ENCODE measurements at regions of chr1 and their contacts with region 1.

Region 1: DNA sequence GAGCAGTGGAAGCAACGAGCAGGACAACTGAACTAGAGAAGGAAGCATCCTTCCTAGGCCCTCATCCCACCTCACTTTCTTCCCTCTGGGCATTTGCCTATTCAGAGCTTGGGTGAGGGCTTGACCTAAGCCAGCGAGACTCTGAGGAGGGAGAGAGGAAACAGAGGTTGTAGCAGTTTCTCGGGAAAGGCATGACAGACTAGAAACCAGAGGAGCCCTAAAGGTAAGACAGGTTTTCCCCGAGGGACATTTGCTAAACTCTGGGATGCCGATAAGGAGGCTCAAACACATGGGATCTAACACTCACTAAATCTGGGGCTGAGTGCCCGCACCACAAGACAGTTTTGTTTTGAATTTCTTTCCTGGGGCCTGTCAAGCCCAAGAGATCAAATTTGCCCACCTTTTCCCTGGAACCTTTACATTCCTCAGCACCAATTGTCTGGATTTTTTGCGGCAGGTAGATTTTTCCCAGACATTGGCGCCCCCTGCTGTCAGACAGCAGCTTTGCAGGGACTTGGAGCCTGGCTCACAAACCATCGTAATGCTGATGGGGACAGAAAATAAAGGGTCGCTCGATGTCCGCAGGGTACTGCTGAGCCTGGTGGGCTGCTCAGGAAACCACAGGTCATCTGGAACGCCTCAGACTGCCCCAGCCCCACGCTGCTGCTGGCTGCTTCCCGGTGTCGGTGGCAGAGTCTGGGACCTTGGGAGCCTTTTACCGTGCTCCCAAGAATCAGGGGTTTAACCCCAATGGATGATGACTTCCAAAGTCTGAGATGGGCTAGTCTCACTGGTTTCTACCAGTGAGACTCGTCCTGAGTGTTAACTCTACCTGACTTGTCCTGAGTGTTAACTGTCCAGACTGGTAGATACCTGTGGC is 23.4 kb upstream of the TSPAN2 start:
- DNase-seq: peak; percentile 25
- H3K4me3 ChIP-seq: no peak overlapping the region
- H3K27ac ChIP-seq: no peak overlapping the region
- H3K4me1 ChIP-seq: no peaks in the 10 kb centered on the region
- H3K27me3 ChIP-seq: no peaks in the 10 kb centered on the region
- CTCF ChIP-seq: peak; percentile 86 to 88
- POLR2A ChIP-seq: no peak

Region 2: DNA sequence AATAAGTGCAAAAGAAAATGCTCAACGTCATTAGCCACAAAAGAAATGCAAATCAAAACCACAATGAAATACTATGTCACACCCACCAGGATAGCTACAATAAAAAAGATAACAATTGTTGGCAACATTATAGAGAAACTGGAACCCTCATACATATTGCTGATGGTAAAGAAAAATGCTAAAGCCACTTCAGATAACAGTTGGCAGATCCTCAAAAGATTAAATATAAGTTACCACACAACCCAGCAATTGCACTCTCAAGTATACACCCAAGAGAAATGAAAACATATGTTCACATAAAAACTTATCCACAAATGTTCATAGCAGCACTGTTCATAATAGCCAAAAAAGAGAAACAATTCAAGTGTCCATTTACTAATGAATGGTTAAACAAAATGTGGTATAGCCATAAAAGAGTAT is 622.5 kb before region 1 on chr1:
- CTCF ChIA-PET with region 1: no interaction called
- POLR2A ChIA-PET with region 1: no interaction called
- dilution Hi-C with region 1: no loop called
- intact Hi-C with region 1: no loop called
- DNase-seq: no peak
- H3K4me3 ChIP-seq: no peak overlapping the region
- H3K27ac ChIP-seq: no peak overlapping the region
- H3K4me1 ChIP-seq: no peaks in the 10 kb centered on the region
- H3K27me3 ChIP-seq: no peaks in the 10 kb centered on the region
- CTCF ChIP-seq: no peak
- POLR2A ChIP-seq: no peak

Region 3: DNA sequence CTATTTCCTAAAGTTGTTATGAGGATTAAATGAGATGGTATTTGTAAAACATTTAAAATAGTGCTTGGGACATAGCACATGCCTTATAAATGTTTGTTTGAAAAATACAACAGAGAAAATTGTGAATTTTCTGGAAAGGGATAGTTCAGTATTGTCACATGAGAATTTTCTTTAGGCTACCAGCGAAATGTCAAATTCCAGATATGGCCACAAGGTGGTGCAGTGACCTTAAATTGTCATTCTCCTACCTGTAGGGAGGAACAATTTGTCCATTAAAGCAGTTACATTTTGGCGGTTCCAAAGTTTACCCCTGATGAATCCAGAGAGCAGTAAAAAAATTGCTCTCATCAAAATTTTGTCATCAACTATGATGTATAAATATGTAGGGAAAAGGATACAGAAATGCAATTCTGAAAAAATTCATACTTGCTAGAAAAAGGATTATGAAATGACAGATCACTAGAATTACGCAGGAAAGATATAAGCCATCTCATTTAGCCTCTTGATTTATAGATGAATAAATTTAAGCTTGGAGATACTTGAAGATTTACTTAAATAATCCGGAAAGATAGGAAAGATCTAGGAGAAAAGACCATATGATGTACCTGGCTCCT is 133.4 kb before region 1 on chr1:
- CTCF ChIA-PET with region 1: interaction called, 48 read pairs
- POLR2A ChIA-PET with region 1: no interaction called
- dilution Hi-C with region 1: no loop called
- intact Hi-C with region 1: loop called (anchors 1 kb)
- DNase-seq: peak; percentile 54
- H3K4me3 ChIP-seq: no peak overlapping the region
- H3K27ac ChIP-seq: no peak overlapping the region
- H3K4me1 ChIP-seq: no peaks in the 10 kb centered on the region
- H3K27me3 ChIP-seq: peaks cover 0 to 14% of the 10 kb centered on the region in 2 experiments
- CTCF ChIP-seq: peak; percentile 50 to 60
- POLR2A ChIP-seq: no peak

Region 4: DNA sequence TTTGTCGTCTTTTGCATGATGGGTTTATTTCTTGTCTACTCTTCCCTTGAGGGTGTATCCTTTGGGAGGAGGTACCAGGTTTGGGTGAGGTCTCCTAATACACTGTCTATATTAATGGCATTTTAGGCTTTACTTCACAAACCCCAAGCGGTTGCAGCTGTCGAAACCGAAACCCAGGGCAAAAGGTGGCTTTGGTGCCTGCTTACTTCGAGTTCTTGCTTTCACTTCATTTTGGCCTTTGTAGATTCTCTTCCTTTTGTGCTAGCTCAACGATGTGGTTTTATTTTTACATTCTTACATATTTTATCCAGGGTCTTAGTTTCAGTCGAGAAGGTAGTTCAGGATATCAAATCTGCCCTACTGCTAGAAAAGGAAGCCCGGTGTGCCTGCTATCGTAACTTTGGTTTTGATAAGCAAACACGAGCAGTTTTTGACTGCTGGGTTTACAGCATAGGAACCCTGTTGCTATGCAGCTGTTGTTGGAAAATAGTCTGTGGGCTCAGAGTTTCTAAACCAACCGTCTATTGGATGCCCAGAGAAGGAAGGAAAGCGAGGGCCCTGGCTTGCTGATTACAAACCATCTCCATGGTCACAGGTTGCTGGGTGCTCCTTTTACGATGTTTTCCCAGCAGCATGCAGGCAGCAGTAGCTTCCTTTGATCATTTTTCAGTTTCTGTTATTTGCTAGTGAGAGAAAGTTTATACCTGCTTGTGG is 13.6 kb before region 1 on chr1:
- CTCF ChIA-PET with region 1: interaction called, 28 read pairs
- POLR2A ChIA-PET with region 1: no interaction called
- dilution Hi-C with region 1: no loop called
- intact Hi-C with region 1: no loop called
- DNase-seq: peak; percentile 65
- H3K4me3 ChIP-seq: peak overlapping the region in 1 of 3 experiments; percentile 48
- H3K27ac ChIP-seq: no peak overlapping the region
- H3K4me1 ChIP-seq: no peaks in the 10 kb centered on the region
- H3K27me3 ChIP-seq: peaks cover 0 to 1% of the 10 kb centered on the region in 2 experiments
- CTCF ChIP-seq: no peak
- POLR2A ChIP-seq: no peak

Region 5: DNA sequence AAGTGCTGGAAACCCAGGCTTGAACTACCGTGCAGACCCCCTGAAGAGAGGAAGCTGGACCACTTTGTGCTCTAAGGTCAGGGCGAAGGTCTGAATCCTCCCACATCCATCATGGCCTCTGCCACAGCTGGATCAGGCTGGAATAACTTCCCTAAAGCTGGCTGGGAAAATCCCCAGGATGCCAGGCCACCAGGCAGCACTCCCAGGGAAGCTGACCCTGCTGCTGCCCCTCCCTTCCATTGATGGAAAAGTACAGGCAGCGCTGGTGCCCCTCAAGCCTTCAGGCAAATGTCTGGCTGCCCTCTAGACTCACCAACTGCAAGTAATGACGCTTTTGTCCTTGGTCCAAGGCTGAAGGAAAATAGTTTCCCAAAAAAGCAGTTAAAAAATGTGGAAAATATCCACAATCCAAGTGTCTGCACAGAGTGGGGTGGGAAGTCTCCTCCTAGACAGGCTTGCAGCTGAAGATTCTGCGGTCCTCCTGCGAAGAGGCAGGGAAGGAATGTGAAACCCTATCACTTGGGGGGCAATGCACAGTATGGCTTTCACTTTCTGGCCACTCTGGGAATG is 16.4 kb after region 1 on chr1:
- CTCF ChIA-PET with region 1: interaction called, 11 read pairs
- POLR2A ChIA-PET with region 1: no interaction called
- dilution Hi-C with region 1: no loop called
- intact Hi-C with region 1: no loop called
- DNase-seq: no peak
- H3K4me3 ChIP-seq: no peak overlapping the region
- H3K27ac ChIP-seq: no peak overlapping the region
- H3K4me1 ChIP-seq: no peaks in the 10 kb centered on the region
- H3K27me3 ChIP-seq: peaks cover 0 to 3% of the 10 kb centered on the region in 2 experiments
- CTCF ChIP-seq: no peak
- POLR2A ChIP-seq: no peak

Measured in endothelial cell of umbilical vein (primary cell).